Activated T-helper 2 cell treated with anti-CD3 and anti-CD28 coated beads, Interferon-gamma antibody, Interleukin-2, Interleukin-4, amounts not matched to agents 10 μg/mL and 5 μg/mL and 100 μg/mL, durations not matched to agents 14 hours and 24 hours and 36 hours (primary cell): ENCODE measurements at regions of chr9 and their contacts with region 1.

Region 1: GRCh38 chr9:72509635-72510034 is 11.8 kb upstream of the TMC1 start:
- DNase-seq: no peak
- H3K4me3 Mint-ChIP-seq: peak overlapping the region; percentile 23
- H3K27ac Mint-ChIP-seq: peak overlapping the region; percentile 80
- H3K4me1 Mint-ChIP-seq: peaks cover 20% of the 10 kb centered on the region
- H3K27me3 Mint-ChIP-seq: no peaks in the 10 kb centered on the region

Region 2: DNA sequence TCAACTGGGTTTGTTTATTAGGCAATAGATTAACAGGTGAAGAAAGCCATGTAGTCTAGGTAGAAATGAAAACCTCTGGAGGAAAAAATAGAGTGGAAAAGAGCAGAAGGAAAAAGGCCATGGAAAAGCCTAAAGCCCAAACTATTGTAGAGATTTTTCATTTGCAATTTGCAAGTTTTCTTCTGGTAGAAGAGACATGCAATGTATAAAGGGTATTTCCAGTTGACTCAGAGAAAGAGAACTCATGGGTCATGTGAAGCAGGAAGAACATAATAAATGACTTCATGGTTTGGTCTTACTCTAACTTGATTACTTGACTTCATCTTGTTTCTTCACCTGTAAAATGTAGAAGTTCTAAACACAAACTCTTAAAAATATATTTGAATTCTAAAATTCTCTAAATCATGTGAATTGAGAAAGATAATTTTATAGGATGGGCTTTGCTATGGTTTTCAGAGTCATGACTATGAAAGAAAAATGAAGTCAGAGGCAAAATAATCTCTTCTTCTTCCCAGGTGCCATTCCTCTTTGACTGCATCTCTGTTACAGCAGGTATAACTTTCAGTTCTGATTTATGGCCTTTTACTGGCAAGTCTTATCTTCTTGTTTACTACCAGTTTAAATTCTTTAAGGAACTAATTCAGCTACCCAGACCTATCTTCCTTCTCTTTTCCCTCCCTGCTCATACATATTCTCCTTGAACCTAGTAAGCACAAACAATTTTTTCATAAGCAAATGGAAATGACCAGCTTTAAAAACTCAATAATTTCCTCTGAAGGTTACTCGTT is 36.0 kb before region 1 on chr9:
- intact Hi-C with region 1: loop called (anchors 1 kb)
- DNase-seq: no peak
- H3K4me3 Mint-ChIP-seq: no peak overlapping the region
- H3K27ac Mint-ChIP-seq: peak overlapping the region; percentile 77
- H3K4me1 Mint-ChIP-seq: peaks cover 33% of the 10 kb centered on the region
- H3K27me3 Mint-ChIP-seq: no peaks in the 10 kb centered on the region

Region 3: DNA sequence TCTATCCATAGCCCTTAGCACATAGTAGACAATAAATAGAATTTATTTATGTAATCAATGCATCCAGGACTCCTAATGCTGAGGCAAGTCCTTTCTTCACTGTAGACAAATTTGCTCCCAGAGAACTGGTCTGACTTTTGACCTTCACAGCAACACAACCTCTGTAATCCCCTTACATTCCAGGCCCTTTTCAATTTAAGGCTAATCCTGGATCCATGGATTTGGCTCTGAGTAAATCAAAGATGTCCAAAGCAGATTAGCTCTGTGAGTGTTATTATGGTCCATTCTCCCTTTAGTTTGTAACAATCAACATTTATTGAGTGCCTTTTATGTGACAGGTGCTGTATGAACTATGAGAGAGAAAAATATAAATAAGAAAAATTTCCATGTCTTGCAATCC is 15.6 kb before region 1 on chr9:
- intact Hi-C with region 1: loop called (anchors 2 kb)
- DNase-seq: no peak
- H3K4me3 Mint-ChIP-seq: no peak overlapping the region
- H3K27ac Mint-ChIP-seq: no peak overlapping the region
- H3K4me1 Mint-ChIP-seq: peaks cover 4% of the 10 kb centered on the region
- H3K27me3 Mint-ChIP-seq: peaks cover 2% of the 10 kb centered on the region

Region 4: GRCh38 chr9:72526901-72527800 is 17.5 kb after region 1 on chr9:
- intact Hi-C with region 1: loop called (anchors 1 kb)
- DNase-seq: peak; percentile 61
- H3K4me3 Mint-ChIP-seq: peak overlapping the region; percentile 72
- H3K27ac Mint-ChIP-seq: peak overlapping the region; percentile 94
- H3K4me1 Mint-ChIP-seq: peaks cover 43% of the 10 kb centered on the region
- H3K27me3 Mint-ChIP-seq: no peaks in the 10 kb centered on the region

Region 5: GRCh38 chr9:72541676-72542289 is 32.1 kb after region 1 on chr9:
- intact Hi-C with region 1: loop called (anchors 1 kb)
- DNase-seq: no peak
- H3K4me3 Mint-ChIP-seq: no peak overlapping the region
- H3K27ac Mint-ChIP-seq: peak overlapping the region; percentile 73
- H3K4me1 Mint-ChIP-seq: peaks cover 26% of the 10 kb centered on the region
- H3K27me3 Mint-ChIP-seq: no peaks in the 10 kb centered on the region

Region 6: DNA sequence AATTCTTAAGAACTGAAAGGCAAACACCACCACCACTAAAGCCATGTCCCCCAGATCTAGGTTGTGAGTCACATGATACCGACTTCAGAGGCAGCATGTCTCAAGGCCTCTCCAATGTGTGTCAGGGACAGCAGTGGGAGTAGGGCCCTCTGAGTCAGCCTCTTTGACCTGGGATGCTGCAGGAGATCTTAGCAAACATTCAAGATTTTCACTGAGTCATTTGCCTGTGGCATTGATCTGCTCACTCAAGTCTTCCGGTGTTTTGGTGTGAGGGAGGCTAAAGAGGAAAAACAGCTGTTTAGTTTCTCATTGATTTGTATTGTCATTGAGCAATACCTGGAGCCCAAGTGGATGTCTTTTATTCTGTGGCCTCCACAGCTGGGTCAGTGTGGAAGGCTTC is 47.9 kb after region 1 on chr9:
- intact Hi-C with region 1: loop called (anchors 5 kb)
- DNase-seq: peak; percentile 9
- H3K4me3 Mint-ChIP-seq: no peak overlapping the region
- H3K27ac Mint-ChIP-seq: peak overlapping the region; percentile 69
- H3K4me1 Mint-ChIP-seq: peaks cover 17% of the 10 kb centered on the region
- H3K27me3 Mint-ChIP-seq: peaks cover 3% of the 10 kb centered on the region